ENCODE measurements at regions of chr19 and their contacts with region 1.

Region 1: GRCh38 chr19:32976208-32976805 is 4.3 kb downstream of the FAAP24 start:
- DNase-seq: peak; percentile 31 to 89
- H3K4me3 ChIP-seq: no peak overlapping the region
- H3K27ac ChIP-seq: no peak overlapping the region
- H3K4me1 ChIP-seq: no peaks in the 10 kb centered on the region; a peak in 1 of 7 replicates
- H3K27me3 ChIP-seq: no peaks in the 10 kb centered on the region
- CTCF ChIP-seq: peak; percentile 39 to 84 (median 78)
- EP300 ChIP-seq: no peak
- POLR2A ChIP-seq: no peak
- RAD21 ChIP-seq: peak; percentile 89 to 92

Region 2: GRCh38 chr19:32988724-32989123 is 12.4 kb after region 1 on chr19:
- CTCF ChIA-PET with region 1: interaction called, 18 read pairs
- POLR2A ChIA-PET with region 1: interaction called, 3 read pairs
- DNase-seq: no peak
- H3K4me3 ChIP-seq: no peak overlapping the region
- H3K27ac ChIP-seq: no peak overlapping the region
- H3K4me1 ChIP-seq: no peaks in the 10 kb centered on the region
- H3K27me3 ChIP-seq: no peaks in the 10 kb centered on the region
- CTCF ChIP-seq: no peak
- EP300 ChIP-seq: no peak
- POLR2A ChIP-seq: no peak
- RAD21 ChIP-seq: no peak

Region 3: DNA sequence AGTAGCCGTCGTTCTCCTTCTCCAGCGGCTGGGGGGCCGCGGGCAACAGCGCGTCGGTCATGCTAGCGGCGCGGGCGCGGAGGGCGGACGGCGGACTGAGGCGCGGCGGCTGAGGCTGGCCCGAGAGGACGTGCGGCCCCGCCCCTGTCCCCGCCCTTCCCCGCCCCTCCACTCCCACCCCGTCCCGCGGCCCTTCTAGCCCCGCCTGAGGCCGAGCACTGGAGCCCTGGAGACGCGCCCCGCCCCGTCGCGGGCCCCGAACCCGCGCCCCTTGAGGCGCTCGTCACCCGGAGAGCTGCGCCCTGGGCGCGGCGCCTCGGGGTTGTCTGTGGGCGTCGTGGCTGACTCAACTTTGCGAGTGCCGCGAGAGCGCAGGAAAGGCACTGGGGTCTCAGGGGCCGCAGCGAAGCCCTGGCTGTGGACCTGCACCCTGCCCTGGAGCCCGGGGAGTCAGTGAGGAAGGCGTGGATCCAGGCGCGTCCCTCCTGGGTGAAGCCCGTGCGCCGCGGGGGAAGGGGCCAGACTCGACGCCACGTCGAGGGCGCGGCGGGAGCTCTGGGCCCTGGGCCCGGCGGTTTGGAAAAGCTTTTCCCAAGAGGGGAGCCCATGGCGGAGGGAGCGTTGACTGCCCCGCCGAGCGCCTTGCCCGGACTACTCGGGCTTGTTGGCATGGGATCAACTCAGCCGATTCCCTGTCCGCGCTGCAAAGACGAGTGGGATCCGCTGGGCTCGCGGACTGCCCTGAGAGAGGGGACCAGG is 88.7 kb after region 1 on chr19 and contains the start of gene RHPN2:
- CTCF ChIA-PET with region 1: interaction called, 11 read pairs
- POLR2A ChIA-PET with region 1: no interaction called
- DNase-seq: peak in 1 of 2 experiments; percentile 82
- H3K4me3 ChIP-seq: peak within 1 kb of the TSS; percentile 54 to 100 (median 75)
- H3K27ac ChIP-seq: no peak within 1 kb of the TSS
- H3K4me1 ChIP-seq: peaks cover 0 to 4% (median 0%) of the 10 kb centered on the region in 4 experiments; a peak in 1 of 7 replicates
- H3K27me3 ChIP-seq: peaks cover 0 to 4% (median 3%) of the 10 kb centered on the region in 4 experiments; a peak in 4 of 7 replicates
- CTCF ChIP-seq: no peak
- EP300 ChIP-seq: no peak
- POLR2A ChIP-seq: peak in 1 of 2 experiments; percentile 29; a peak in 1 of 3 replicates
- RAD21 ChIP-seq: no peak
- total RNA-seq, gene RHPN2: 31.1 and 36.2 TPM in 2 replicates

Region 4: GRCh38 chr19:33104520-33104919 is 128.2 kb after region 1 on chr19:
- CTCF ChIA-PET with region 1: interaction called, 10 read pairs
- POLR2A ChIA-PET with region 1: no interaction called
- DNase-seq: no peak
- H3K4me3 ChIP-seq: no peak overlapping the region
- H3K27ac ChIP-seq: no peak overlapping the region
- H3K4me1 ChIP-seq: no peaks in the 10 kb centered on the region
- H3K27me3 ChIP-seq: no peaks in the 10 kb centered on the region
- CTCF ChIP-seq: no peak
- EP300 ChIP-seq: no peak
- POLR2A ChIP-seq: no peak
- RAD21 ChIP-seq: no peak

Region 5: GRCh38 chr19:33114302-33114701 is 138.0 kb after region 1 on chr19:
- CTCF ChIA-PET with region 1: interaction called, 25 read pairs
- POLR2A ChIA-PET with region 1: no interaction called
- DNase-seq: no peak
- H3K4me3 ChIP-seq: no peak overlapping the region
- H3K27ac ChIP-seq: no peak overlapping the region
- H3K4me1 ChIP-seq: no peaks in the 10 kb centered on the region
- H3K27me3 ChIP-seq: no peaks in the 10 kb centered on the region
- CTCF ChIP-seq: no peak
- EP300 ChIP-seq: no peak
- POLR2A ChIP-seq: no peak
- RAD21 ChIP-seq: no peak

Region 6: GRCh38 chr19:33125929-33126388 is 149.7 kb after region 1 on chr19:
- CTCF ChIA-PET with region 1: interaction called, 19 read pairs
- POLR2A ChIA-PET with region 1: interaction called, 3 read pairs
- DNase-seq: peak in 1 of 2 experiments; percentile 58
- H3K4me3 ChIP-seq: no peak overlapping the region
- H3K27ac ChIP-seq: no peak overlapping the region
- H3K4me1 ChIP-seq: no peaks in the 10 kb centered on the region
- H3K27me3 ChIP-seq: no peaks in the 10 kb centered on the region
- CTCF ChIP-seq: peak; percentile 71 to 82 (median 80)
- EP300 ChIP-seq: peak in 1 of 2 experiments; percentile 6; a peak in 1 of 3 replicates
- POLR2A ChIP-seq: no peak
- RAD21 ChIP-seq: peak; percentile 75 to 79